ENCODE measurements at regions of chr4 and their contacts with region 1.

Region 1: DNA sequence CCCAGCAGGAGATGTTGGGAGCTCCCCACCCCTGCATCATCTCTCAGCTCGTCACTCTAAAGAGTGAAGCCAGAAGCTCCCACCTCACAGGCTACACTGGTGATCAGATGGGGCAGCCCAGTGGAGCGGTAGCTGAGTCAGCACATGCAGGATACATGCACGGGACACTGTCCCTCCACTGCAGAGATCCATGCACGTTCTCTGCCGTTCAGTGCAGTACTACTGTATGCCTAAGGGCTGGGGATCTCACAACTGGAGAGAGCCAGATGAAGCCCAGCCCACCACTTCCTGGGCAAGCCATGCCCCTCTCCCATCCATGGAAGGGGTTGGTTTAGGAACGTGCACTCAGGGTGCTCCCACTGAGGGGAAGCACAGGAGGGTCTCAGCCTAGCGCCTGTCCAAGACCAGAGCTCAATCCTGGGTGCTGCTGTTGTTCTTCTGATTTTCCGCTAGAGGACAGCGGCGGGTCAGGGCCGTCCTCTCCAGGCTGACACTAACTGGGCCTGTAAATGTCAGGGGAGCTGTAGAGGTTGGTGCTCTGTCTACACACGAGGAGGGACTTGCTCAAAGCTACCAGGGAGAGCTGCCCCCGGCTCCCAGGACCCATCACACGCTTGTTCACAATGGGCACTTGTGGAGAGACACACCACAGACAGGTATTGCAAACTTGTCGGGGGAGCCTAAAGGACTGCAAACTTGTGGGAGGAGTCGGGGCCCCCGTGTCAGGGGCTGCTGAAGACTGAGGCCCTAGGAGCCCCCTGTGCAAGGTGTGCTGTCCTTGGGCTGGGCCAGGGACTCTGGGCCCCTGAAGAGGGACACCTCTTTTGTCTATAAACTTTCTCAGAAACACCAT is 18.2 kb upstream of the ABLIM2 start:
- DNase-seq: peak; percentile 89
- H3K4me3 ChIP-seq: no peak overlapping the region; a peak in 1 of 4 replicates
- H3K27ac ChIP-seq: no peak overlapping the region; a peak in 1 of 4 replicates
- H3K4me1 ChIP-seq: peaks cover 0 to 18% of the 10 kb centered on the region in 2 experiments; a peak in 1 of 4 replicates
- H3K27me3 ChIP-seq: 0 out of 2 replicates have a peak, but pooled peaks cover under 1% of the 10 kb centered on the region
- CTCF ChIP-seq: peak; percentile 68
- EP300 ChIP-seq: no peak
- RAD21 ChIP-seq: peak; percentile 94

Region 2: DNA sequence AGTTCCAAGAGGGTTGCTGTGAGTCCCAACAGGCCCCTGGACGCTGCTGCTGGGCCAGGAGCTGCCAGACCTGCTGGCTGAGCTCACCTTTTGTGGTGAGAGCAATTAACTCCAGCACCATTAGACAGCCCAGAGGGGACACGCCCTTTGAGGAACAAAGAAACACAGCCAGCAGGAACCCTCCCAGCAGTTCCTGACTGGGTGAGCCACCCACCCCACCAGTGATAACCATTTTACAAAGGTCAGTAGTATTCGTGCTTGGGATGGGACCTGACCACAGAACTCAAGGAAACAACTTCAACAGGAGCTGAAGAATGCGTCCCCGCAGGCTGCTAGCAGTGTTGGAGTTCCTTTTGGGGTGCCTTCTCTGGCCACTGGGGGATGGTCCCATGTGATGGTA is 198.3 kb before region 1 on chr4:
- CTCF ChIA-PET with region 1: no interaction called
- POLR2A ChIA-PET with region 1: no interaction called
- DNase-seq: no peak
- H3K4me3 ChIP-seq: no peak overlapping the region
- H3K27ac ChIP-seq: no peak overlapping the region
- H3K4me1 ChIP-seq: peaks cover 0 to 11% of the 10 kb centered on the region in 2 experiments; a peak in 2 of 4 replicates
- H3K27me3 ChIP-seq: no peaks in the 10 kb centered on the region
- CTCF ChIP-seq: no peak
- EP300 ChIP-seq: no peak
- RAD21 ChIP-seq: no peak

Region 3: DNA sequence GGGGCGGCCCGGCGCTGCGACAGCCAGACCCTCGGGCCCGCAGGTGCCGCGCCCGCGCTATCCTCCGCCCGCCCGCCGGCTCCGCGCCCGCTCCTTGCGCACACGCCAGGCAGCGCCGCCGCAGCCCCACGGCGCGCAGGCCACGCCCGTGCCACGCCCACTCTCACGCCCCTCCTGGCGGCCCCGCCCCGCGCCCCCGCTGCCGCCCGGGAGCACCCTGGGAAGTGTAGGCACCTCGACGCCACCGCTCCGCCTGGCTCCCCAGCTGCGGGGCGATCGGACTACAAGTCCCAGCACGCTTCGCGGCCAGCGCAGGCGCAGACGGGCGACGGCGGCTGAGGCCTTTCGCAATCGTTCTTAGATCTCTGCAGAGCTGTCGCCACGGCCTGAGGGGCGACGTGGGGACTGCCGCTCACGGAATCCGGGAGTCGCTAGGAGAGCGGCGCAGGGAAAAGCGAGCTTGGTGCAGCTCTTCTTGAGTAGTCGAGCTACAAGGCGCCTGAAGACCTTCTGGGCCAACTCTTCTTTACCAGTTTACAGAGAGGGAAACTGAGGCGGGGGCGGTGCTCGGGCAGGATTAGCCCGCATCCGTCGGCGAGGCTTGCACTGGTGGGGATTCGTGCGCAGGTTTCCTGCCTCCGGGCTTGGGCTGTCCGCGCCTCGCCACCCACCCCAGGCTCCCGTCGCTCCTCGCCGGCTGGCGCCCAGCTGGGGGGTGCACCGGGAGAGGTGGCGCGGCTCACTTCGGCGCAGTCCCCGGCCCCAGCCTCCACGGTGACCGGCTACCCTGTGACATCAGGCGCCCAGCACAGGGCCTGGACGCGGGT is 17.9 kb before region 1 on chr4 and contains the start of gene ABLIM2:
- CTCF ChIA-PET with region 1: interaction called, 26 read pairs
- POLR2A ChIA-PET with region 1: no interaction called
- DNase-seq: peak; percentile 99
- H3K4me3 ChIP-seq: peak within 1 kb of the TSS; percentile 57 to 86
- H3K27ac ChIP-seq: peak within 1 kb of the TSS in 1 of 2 experiments; percentile 58; a peak in 1 of 4 replicates
- H3K4me1 ChIP-seq: peaks cover 0 to 21% of the 10 kb centered on the region in 2 experiments; a peak in 1 of 4 replicates
- H3K27me3 ChIP-seq: peaks cover 13% of the 10 kb centered on the region; the same call in 1 of the 2 replicates
- CTCF ChIP-seq: no peak
- EP300 ChIP-seq: no peak
- RAD21 ChIP-seq: no peak; the same call in 1 of the 2 replicates
- polyA plus RNA-seq, gene ABLIM2: 0.53 and 0.80 TPM in 2 replicates

Region 4: GRCh38 chr4:8198906-8199593 is 22.3 kb after region 1 on chr4 and contains the start of gene SH3TC1:
- CTCF ChIA-PET with region 1: interaction called, 29 read pairs
- POLR2A ChIA-PET with region 1: interaction called, 3 read pairs
- DNase-seq: peak; percentile 97
- H3K4me3 ChIP-seq: peak within 1 kb of the TSS; percentile 48 to 57
- H3K27ac ChIP-seq: peak within 1 kb of the TSS in 1 of 2 experiments; percentile 90; a peak in 2 of 4 replicates
- H3K4me1 ChIP-seq: peaks cover 13 to 59% of the 10 kb centered on the region in 2 experiments; a peak in 2 of 4 replicates
- H3K27me3 ChIP-seq: no peaks in the 10 kb centered on the region
- CTCF ChIP-seq: no peak
- EP300 ChIP-seq: peak in 1 of 2 experiments; percentile 68; a peak in 2 of 4 replicates
- RAD21 ChIP-seq: no peak
- polyA plus RNA-seq, gene SH3TC1: 2.7 and 2.9 TPM in 2 replicates

Region 5: DNA sequence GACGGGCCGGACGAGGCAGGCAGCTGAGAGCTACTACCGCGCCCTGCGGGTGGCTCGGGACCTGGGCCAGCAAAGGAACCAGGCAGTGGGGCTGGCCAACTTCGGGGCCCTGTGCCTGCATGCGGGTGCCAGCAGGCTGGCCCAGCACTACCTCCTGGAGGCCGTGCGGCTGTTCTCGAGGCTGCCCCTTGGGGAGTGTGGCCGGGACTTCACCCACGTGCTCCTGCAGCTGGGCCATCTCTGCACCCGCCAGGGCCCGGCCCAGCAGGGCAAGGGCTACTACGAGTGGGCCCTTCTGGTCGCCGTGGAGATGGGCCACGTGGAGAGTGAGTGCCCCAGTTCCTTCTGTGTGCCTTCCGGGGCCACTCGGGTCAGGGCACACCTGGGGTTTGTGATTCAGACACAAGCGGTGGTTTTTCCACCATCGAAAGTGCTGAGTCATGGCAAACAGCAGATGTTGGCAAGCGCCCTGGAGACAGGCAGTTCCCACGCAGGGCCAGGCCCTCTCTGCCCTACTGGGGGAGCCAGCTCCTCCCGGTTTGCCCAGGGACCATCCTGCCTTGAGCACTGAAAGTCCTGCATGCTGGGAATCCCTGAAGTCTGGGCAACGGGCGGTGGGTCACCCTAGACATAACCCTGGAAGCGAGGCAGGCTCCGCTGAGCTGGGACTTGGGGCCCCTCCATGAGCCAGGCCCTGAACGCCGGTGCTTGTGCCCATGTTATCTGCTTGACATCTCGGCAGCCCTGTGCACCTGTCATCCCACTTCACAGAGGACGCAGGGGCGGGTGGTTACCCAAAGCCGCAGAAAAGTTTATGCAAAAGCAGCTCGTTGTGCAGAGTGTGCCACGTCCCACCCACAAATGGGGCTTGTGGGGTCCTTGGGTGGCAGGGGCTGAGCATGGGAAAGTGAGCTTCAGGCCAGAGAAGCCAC is 51.8 kb after region 1 on chr4:
- CTCF ChIA-PET with region 1: interaction called, 42 read pairs
- POLR2A ChIA-PET with region 1: no interaction called
- DNase-seq: no peak
- H3K4me3 ChIP-seq: no peak overlapping the region
- H3K27ac ChIP-seq: peak overlapping the region in 1 of 2 experiments; percentile 17; a peak in 1 of 4 replicates
- H3K4me1 ChIP-seq: peaks cover 0 to 22% of the 10 kb centered on the region in 2 experiments; a peak in 1 of 4 replicates
- H3K27me3 ChIP-seq: no peaks in the 10 kb centered on the region
- CTCF ChIP-seq: no peak
- EP300 ChIP-seq: no peak
- RAD21 ChIP-seq: no peak

Region 6: DNA sequence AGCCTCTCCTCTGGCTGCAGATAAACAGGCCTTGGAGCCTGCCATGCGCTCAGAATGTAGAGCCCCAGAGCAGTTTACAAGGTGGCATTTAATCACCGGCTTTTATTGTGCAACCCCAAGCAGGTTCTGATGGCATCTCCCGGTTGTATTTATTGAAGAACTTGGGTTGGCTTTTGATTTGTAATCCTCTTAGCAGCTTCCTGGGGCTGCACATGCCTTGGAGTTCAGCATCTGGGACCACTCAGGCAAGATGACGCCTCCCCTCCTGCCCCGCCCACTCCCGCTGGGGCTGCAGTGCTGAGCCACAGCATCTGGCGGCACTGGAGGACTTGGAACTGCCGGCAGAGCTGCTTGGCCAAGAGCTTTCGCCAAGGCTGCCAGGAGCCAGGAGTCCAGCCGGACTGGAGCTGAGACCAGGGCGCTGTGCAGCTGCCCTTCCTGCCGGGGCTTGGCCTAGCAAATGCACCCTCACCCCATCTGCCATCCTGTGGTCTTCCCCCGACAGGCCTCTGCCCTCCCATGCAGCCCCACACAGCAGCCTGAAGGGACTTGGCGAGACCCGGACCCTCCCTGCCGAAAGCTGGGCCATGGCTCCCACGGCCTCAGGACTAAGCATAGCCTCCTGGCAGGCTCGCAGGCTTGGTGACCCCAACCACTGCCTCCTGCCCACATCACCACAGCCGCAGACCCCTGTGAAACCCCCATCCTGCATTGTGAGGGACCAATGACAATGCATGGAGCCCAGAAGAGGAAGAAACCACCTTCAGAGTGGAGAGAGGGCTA is 98.2 kb after region 1 on chr4:
- CTCF ChIA-PET with region 1: interaction called, 12 read pairs
- POLR2A ChIA-PET with region 1: no interaction called
- DNase-seq: peak; percentile 95
- H3K4me3 ChIP-seq: no peak overlapping the region
- H3K27ac ChIP-seq: peak overlapping the region; percentile 55 to 93; a peak in 3 of 4 replicates
- H3K4me1 ChIP-seq: peaks cover 38 to 39% of the 10 kb centered on the region in 2 experiments
- H3K27me3 ChIP-seq: no peaks in the 10 kb centered on the region
- CTCF ChIP-seq: peak; percentile 60
- EP300 ChIP-seq: peak in 1 of 2 experiments; percentile 43; a peak in 1 of 4 replicates
- RAD21 ChIP-seq: peak; percentile 85

Region 7: GRCh38 chr4:8295416-8295815 is 118.6 kb after region 1 on chr4:
- CTCF ChIA-PET with region 1: no interaction called
- POLR2A ChIA-PET with region 1: no interaction called
- DNase-seq: no peak
- H3K4me3 ChIP-seq: no peak overlapping the region
- H3K27ac ChIP-seq: no peak overlapping the region
- H3K4me1 ChIP-seq: no peaks in the 10 kb centered on the region
- H3K27me3 ChIP-seq: no peaks in the 10 kb centered on the region
- CTCF ChIP-seq: no peak
- EP300 ChIP-seq: no peak
- RAD21 ChIP-seq: no peak

Region 8: DNA sequence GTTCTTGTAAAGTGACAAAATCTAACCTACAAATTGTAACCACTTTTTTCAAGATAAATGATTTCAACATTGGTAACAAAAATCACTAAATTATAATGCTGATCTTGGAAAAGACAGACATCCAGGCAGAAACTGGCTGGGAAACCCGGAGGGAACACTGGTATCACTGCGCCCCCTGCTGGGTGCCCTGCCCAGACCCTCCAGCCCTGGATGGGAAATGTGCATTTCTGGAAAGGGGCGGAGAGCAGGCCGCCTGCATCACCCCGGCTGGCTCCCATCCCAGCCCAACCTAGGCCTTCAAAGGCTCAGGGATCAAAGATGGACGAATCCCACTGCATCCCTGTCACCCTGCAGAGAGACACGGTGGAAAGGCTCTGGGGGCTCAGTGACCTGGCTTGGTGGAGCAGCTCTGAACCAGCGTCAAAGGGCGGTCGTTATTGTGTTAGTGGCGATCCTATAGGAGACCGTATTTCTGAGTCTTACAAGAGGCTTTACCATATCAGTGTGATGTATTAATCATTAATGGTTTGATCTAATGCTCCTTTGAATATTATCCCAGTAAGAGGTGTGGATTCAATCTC is 226.5 kb after region 1 on chr4:
- CTCF ChIA-PET with region 1: interaction called, 42 read pairs
- POLR2A ChIA-PET with region 1: no interaction called
- DNase-seq: peak; percentile 96
- H3K4me3 ChIP-seq: no peak overlapping the region
- H3K27ac ChIP-seq: peak overlapping the region in 1 of 2 experiments; percentile 66; a peak in 2 of 4 replicates
- H3K4me1 ChIP-seq: peaks cover 0 to 14% of the 10 kb centered on the region in 2 experiments; a peak in 1 of 4 replicates
- H3K27me3 ChIP-seq: no peaks in the 10 kb centered on the region
- CTCF ChIP-seq: peak; percentile 98
- EP300 ChIP-seq: no peak
- RAD21 ChIP-seq: peak; percentile 99

Region 9: GRCh38 chr4:8428293-8429097 is 251.7 kb after region 1 on chr4:
- CTCF ChIA-PET with region 1: interaction called, 11 read pairs
- POLR2A ChIA-PET with region 1: no interaction called
- DNase-seq: peak; percentile 99
- H3K4me3 ChIP-seq: peak overlapping the region; percentile 80 to 90
- H3K27ac ChIP-seq: peak overlapping the region; percentile 47 to 69
- H3K4me1 ChIP-seq: peaks cover 0 to 16% of the 10 kb centered on the region in 2 experiments; a peak in 1 of 4 replicates
- H3K27me3 ChIP-seq: no peaks in the 10 kb centered on the region
- CTCF ChIP-seq: peak; percentile 61
- EP300 ChIP-seq: no peak
- RAD21 ChIP-seq: no peak